ENCODE measurements at regions of chr6 and their contacts with region 1.

Region 1: GRCh38 chr6:30717042-30717844 is at the start of gene MDC1:
- DNase-seq: peak; percentile 96 to 100 (median 100)
- H3K4me3 ChIP-seq: peak within 1 kb of the TSS; percentile 50 to 95 (median 79)
- H3K27ac ChIP-seq: peak within 1 kb of the TSS; percentile 32 to 98 (median 94)
- H3K27me3 ChIP-seq: no peaks in the 10 kb centered on the region
- CTCF ChIP-seq: peak in 53 of 56 donors; percentile 16 to 71 (median 48)
- total RNA-seq, gene MDC1: 25.7 to 64.4 (median 40.3) TPM

Region 2: GRCh38 chr6:29976588-29977424 is 740.4 kb before region 1 on chr6:
- intact Hi-C with region 1: no loop called
- DNase-seq: peak; percentile 35 to 78 (median 66)
- H3K4me3 ChIP-seq: peak overlapping the region; percentile 40 to 77 (median 61)
- H3K27ac ChIP-seq: peak overlapping the region in 52 of 59 donors; percentile 11 to 89 (median 70)
- H3K27me3 ChIP-seq: peaks cover 0 to 5% (median 0%) of the 10 kb centered on the region in 45 donors
- CTCF ChIP-seq: peak in 20 of 56 donors; percentile 2 to 41 (median 15)

Region 3: DNA sequence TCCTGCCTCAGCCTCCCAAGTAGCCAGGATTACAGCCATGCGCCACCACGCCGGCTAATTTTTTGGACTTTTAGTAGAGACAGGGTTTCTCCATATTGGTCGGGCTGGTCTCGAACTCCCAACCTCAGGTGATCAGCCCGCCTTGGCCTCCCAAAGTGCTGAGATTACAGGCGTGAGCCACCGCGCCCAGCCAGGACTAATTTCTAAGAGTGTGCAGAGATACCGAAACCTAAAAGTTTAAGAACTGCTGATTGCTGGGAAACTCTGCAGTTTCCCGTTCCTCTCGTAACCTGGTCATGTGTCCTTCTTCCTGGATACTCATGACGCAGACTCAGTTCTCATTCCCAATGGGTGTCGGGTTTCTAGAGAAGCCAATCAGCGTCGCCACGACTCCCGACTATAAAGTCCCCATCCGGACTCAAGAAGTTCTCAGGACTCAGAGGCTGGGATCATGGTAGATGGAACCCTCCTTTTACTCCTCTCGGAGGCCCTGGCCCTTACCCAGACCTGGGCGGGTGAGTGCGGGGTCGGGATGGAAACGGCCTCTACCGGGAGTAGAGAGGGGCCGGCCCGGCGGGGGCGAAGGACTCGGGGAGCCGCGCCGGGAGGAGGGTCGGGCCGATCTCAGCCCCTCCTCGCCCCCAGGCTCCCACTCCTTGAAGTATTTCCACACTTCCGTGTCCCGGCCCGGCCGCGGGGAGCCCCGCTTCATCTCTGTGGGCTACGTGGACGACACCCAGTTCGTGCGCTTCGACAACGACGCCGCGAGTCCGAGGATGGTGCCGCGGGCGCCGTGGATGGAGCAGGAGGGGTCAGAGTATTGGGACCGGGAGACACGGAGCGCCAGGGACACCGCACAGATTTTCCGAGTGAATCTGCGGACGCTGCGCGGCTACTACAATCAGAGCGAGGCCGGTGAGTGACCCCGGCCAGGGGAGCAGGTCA is 227.9 kb before region 1 on chr6 and contains the start of gene HLA-E:
- intact Hi-C with region 1: loop called in 1 of 2 experiments (anchors 10 kb)
- DNase-seq: peak; percentile 43 to 94 (median 85)
- H3K4me3 ChIP-seq: peak within 1 kb of the TSS; percentile 36 to 93 (median 78)
- H3K27ac ChIP-seq: peak within 1 kb of the TSS in 56 of 59 donors; percentile 36 to 97 (median 86)
- H3K27me3 ChIP-seq: peaks cover 0 to 24% (median 0%) of the 10 kb centered on the region in 45 donors
- CTCF ChIP-seq: peak in 7 of 56 donors; percentile 8 to 33 (median 21)
- total RNA-seq, gene HLA-E: 69.4 to 274 (median 123) TPM

Region 4: DNA sequence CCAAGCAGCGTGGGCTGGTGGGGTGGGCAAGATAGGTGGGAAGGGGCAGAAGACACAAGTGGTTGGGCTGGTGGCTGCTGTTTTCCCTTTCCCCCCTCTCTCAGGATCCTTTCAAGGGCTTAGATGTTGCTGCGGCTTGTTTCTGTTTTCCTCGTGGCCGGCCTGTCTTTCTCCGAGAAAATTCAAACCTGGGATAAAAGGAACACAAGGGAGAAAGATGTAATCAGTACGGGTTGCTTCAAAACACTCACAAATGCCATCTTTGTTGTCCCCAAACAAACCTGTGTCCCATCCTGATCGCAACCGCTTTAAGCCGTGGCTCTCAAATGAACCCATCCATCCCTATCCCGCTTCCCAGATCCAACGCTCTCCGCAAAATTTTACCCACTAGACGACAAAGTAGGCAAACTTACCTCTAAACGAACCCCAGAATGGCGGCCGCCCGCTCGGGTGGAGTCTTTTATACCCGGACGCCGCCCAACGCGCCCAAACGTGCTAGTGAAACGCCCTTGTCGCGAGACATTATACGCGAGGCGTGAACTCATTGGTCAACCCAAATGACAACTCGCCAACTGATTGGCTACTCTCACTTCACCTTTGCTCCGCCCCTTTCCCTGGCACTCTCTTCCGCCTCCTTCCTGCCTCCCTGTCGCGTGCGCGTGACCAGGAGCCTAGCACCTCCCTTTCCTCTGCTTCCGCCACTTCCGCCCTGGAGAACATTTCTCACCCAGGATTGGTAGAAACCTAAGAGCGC is 100.3 kb before region 1 on chr6 and contains the start of gene PPP1R10:
- intact Hi-C with region 1: loop called (anchors 2 to 5 kb)
- DNase-seq: peak; percentile 96 to 99 (median 99)
- H3K4me3 ChIP-seq: peak within 1 kb of the TSS; percentile 62 to 100 (median 91)
- H3K27ac ChIP-seq: peak within 1 kb of the TSS; percentile 95 to 100 (median 99)
- H3K27me3 ChIP-seq: no peaks in the 10 kb centered on the region
- CTCF ChIP-seq: no peak
- total RNA-seq, gene PPP1R10: 42.2 to 100 (median 68.4) TPM

Region 5: DNA sequence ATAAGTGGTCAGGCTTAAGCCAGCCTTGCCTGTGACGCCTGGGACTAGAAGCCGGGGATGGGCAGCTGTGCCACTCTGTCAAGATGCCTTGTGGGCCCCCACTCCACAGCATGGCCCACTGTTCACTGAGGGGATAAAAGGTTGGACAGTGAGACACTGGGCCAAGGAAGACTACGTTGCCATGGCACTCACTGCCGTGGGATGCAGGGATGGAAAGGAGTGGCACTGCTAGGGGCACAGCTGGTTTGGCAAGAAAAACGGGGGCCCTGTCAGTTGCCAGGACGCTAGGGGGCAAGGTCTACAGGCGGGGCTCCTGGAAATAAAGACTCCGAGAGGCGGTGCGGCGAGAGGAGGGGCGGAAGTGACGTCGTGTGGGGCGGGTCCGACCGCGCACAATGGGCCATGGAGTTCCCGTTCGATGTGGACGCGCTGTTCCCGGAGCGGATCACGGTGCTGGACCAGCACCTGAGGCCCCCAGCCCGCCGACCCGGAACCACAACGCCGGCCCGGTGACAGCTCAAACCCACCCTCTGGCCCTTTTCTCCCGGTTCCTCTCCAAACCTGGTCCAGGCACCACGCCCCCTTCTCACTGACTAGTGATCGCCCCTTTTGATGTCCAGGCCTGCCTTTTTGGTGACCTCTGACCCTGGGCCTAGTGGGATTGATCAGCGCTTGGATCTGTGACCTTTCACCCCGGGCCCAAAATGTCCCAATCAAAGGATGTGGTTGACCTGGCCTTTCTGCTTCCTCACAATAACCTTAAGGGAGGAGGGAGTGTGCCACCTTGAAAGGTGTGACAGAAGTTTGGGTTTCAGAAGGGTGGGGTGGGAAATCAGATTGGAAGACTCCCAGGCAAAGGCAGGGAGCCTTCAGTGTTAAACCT is 90.5 kb before region 1 on chr6 and contains the start of gene ATAT1:
- intact Hi-C with region 1: loop called in 1 of 2 experiments (anchors 5 kb)
- DNase-seq: peak; percentile 90 to 96 (median 93)
- H3K4me3 ChIP-seq: peak within 1 kb of the TSS; percentile 44 to 88 (median 73)
- H3K27ac ChIP-seq: peak within 1 kb of the TSS; percentile 48 to 98 (median 93)
- H3K27me3 ChIP-seq: no peaks in the 10 kb centered on the region
- CTCF ChIP-seq: peak; percentile 20 to 75 (median 60)
- total RNA-seq, gene ATAT1: 24.7 to 47.2 (median 35.8) TPM

Region 6: GRCh38 chr6:30672445-30673253 is 44.6 kb before region 1 on chr6 and contains the start of gene DHX16:
- intact Hi-C with region 1: loop called in 1 of 2 experiments (anchors 2 kb)
- DNase-seq: peak; percentile 78 to 93 (median 90)
- H3K4me3 ChIP-seq: peak within 1 kb of the TSS; percentile 63 to 100 (median 95)
- H3K27ac ChIP-seq: peak within 1 kb of the TSS in 49 of 59 donors; percentile 12 to 91 (median 69)
- H3K27me3 ChIP-seq: no peaks in the 10 kb centered on the region
- CTCF ChIP-seq: peak; percentile 78 to 100 (median 92)
- total RNA-seq, gene DHX16: 15.0 to 28.6 (median 22.7) TPM

Region 7: DNA sequence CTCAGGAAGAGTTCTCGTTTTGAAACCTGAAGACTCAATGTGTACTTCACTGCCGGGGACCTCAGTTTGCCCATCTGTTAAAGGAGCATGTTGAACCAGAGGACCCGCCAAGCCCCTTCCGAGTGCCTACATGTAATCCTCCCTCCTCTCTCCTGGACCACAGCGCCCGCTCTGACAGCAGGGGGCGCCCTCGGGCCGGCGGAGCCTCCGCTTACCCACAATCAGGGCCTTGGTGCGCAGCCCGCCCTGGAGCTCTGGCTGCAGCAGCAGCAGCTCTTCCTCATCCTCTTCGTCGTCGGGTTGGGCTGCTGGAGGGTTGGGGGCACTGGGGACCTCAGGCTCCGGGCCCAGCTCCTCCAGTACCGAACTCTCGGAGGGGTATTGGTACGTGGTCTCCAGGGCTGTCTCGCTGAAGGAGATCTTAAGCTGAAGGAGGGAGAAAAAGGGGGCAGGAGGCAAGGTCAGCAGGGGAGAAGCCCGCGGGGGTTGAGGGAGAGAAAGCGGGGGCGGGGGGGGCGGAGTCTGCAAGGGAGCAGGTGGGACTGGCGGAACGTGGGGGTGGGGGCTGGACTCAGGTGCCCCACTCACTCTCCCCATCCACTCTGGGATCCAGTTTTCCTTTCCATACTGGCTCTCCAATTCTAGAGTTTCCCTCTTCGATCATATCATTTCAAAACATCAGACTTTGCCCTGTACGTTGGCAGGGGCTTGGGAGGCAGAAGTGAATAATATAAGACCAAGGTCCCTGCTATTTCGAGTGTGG is 38.1 kb before region 1 on chr6:
- intact Hi-C with region 1: loop called (anchors 1 to 2 kb)
- DNase-seq: peak; percentile 78 to 92 (median 84)
- H3K4me3 ChIP-seq: peak overlapping the region in 49 of 59 donors; percentile 8 to 81 (median 35)
- H3K27ac ChIP-seq: peak overlapping the region in 23 of 59 donors; percentile 1 to 87 (median 38)
- H3K27me3 ChIP-seq: no peaks in the 10 kb centered on the region
- CTCF ChIP-seq: peak; percentile 88 to 99 (median 96)

Region 8: DNA sequence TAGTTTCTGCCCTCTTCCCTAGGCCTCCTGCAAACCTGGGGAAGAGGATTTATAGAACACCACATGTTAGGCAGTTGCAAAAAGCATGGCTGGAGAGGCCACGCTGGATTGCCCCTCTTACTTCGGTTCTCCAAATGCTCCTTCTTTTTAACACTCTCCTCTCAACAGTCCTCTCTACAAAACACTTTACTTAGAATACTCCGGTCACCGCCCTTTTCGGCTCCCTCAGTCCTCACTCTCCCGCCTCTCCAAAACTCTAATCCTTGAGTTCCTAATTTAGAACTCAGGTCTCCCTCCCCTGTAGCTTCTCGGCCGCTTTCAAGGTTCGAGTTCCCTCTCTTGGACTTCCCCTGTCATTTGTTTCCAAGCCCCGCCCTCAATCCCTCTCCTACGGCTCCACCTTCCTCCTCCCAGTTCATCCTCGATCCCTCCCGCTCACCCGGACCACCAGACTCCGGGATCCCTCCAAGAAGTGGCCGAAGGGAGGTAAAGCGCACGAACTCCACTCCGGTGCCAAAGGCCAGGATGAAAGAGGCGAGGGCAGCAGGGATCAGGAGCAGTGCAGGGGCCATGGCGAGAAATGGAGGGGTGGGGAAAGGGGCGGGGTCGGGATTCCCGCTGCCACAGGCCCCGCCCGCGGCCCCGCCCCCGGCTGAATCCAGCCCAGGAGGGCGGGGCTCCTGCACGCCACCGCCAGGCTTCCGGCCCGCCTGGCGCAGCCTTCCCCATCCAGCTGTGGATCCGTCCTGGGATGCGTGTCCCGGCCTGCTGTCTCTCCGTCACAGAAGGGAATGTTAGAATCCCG is 26.6 kb before region 1 on chr6 and contains the start of gene NRM:
- intact Hi-C with region 1: loop called in 1 of 2 experiments (anchors 1 kb)
- DNase-seq: peak; percentile 64 to 89 (median 76)
- H3K4me3 ChIP-seq: peak within 1 kb of the TSS; percentile 44 to 79 (median 67)
- H3K27ac ChIP-seq: peak within 1 kb of the TSS in 53 of 59 donors; percentile 1 to 85 (median 68)
- H3K27me3 ChIP-seq: no peaks in the 10 kb centered on the region
- CTCF ChIP-seq: peak in 32 of 56 donors; percentile 11 to 55 (median 30)
- total RNA-seq, gene NRM: 0.83 to 8.0 (median 2.5) TPM